ENCODE measurements at regions of chr17 and their contacts with region 1.

Region 1: DNA sequence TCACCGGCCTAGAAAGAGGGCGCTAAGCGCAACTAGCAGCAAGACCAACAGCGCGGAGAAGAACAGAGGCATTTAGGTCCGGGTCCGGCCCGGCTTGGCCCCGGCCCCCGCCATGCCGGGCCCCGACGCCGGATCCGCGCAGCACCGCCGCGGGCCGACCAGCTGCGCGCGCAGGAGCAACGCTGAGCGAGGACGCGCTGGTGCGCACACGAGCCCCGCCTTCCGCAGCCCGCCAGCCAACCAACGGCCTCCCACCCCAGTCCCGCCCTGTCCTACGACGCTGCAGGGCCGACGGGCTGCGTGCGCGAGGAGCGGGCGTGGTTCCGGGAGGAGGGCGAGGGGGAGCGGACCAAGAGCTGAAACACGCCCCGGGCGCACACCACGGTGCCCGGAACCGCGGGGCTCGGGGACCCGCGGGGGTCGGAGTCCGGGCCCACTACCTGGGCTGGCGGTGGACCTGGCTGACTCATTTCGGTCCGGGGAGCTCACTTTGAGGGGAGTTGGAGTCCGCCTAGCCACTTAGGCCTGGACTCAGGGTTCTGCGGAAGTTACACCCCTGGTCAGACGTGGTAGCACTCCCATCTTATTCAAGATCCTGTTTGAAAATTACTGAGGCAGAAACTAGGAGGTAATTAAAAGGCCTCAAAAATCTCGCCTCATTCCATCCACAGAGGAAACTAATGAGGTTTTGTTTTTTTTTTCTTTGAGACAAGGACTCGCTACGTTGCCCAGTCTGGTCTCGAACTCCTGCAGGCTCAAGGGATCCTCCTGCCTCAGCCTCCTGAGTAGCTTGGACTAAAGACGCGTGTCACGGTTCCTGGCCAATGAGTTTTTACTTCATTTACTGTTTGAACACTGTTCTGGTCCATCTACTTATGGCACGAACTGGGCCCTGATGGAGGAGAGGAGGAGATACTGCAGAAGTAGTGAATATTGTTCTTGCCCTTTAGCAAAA is at the start of gene BLTP2:
- H3K4me3 ChIP-seq: peak within 1 kb of the TSS; percentile 70
- H3K27ac ChIP-seq: peak within 1 kb of the TSS; percentile 55
- H3K4me1 ChIP-seq: peaks cover 5% of the 10 kb centered on the region
- CTCF ChIP-seq: no peak; the same call in 1 of the 2 replicates

Region 2: DNA sequence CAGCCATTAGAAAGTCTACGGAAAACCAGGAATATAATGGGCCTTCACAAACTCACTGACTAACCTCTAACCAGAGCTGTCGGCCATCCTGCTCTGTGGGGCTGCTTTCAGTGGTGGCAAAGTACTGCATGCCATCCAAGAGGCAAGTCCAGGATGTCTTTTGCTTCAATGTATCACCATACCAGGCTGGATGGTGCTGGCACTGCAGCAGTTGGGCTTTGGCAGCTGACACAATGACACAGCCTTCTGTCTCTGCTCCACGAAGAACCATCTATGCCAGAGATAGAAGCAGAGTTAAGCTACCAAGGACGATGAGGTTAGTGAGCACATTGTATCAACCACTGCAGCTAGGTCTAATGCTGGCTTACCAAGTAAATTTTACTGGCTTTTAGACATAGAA is 21.6 kb before region 1 on chr17:
- CTCF ChIA-PET with region 1: interaction called, 8 read pairs
- POLR2A ChIA-PET with region 1: interaction called, 13 read pairs
- H3K4me3 ChIP-seq: no peak overlapping the region
- H3K27ac ChIP-seq: no peak overlapping the region
- H3K4me1 ChIP-seq: no peaks in the 10 kb centered on the region
- CTCF ChIP-seq: no peak

Region 3: GRCh38 chr17:28661635-28662537 is 16.6 kb after region 1 on chr17 and contains the starts of genes SDF2 and SUPT6H:
- CTCF ChIA-PET with region 1: interaction called, 42 read pairs
- POLR2A ChIA-PET with region 1: interaction called, 56 read pairs
- H3K4me3 ChIP-seq: peak within 1 kb of the TSS; percentile 78
- H3K27ac ChIP-seq: peak within 1 kb of the TSS; percentile 81
- H3K4me1 ChIP-seq: peaks cover 7% of the 10 kb centered on the region
- CTCF ChIP-seq: peak; percentile 8; the same call in 1 of the 2 replicates

Region 4: DNA sequence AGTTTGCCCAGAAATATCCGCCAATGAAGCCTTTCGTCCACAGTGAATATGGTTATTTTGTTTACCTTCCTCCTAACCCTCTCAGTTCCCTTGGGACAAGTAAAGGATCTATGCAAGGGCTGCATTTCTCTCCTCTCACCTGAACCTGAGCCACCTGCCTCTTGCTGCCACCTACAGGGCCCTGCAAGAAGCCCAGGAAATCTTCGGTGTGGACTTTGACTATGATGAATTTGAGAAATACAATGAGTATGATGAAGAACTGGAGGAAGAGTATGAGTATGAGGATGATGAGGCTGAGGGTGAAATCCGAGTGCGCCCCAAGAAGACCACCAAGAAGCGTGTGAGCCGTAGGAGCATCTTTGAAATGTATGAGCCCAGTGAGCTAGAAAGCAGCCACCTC is 30.7 kb after region 1 on chr17:
- CTCF ChIA-PET with region 1: interaction called, 18 read pairs
- POLR2A ChIA-PET with region 1: interaction called, 6 read pairs
- H3K4me3 ChIP-seq: no peak overlapping the region
- H3K27ac ChIP-seq: no peak overlapping the region
- H3K4me1 ChIP-seq: no peaks in the 10 kb centered on the region
- CTCF ChIP-seq: no peak

Region 5: GRCh38 chr17:28717578-28718333 is 72.5 kb after region 1 on chr17 and contains the start of gene RAB34:
- CTCF ChIA-PET with region 1: interaction called, 4 read pairs
- POLR2A ChIA-PET with region 1: interaction called, 31 read pairs
- H3K4me3 ChIP-seq: peak within 1 kb of the TSS; percentile 67
- H3K27ac ChIP-seq: peak within 1 kb of the TSS; percentile 95
- H3K4me1 ChIP-seq: peaks cover 16% of the 10 kb centered on the region
- CTCF ChIP-seq: peak; percentile 87